ENCODE measurements at regions of chr4 and their contacts with region 1.

Region 1: GRCh38 chr4:145545538-145546174 is 64.0 kb downstream of the SMAD1 start:
- DNase-seq: no peak
- H3K4me3 ChIP-seq: peak overlapping the region in 1 of 4 donors; percentile 5
- H3K27ac ChIP-seq: peak overlapping the region; percentile 42 to 66 (median 50)
- H3K4me1 ChIP-seq: peaks cover 14 to 58% (median 30%) of the 10 kb centered on the region in 3 donors
- H3K27me3 ChIP-seq: no peaks in the 10 kb centered on the region
- CTCF ChIP-seq: no peak
- POLR2A ChIP-seq: no peak

Region 2: DNA sequence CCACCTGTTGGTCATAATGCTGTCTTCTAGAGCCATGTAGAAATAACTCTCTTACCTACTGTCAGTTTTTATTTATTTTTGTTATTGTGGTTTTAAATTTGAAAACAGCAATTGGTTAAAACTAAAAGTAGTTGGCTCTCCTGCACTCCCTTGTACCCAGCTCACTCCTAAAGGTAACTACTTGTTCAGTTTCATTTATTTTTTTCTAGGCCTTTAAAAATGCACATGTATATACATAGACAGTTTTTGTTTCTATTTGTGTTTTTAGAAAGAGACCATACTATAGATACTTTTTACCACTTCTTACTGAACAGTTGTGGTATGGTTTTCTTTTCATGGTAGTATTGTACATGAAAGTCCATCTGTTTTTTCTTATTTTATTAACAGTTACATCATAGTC is 47.2 kb before region 1 on chr4:
- intact Hi-C with region 1: loop called (anchors 10 kb)
- DNase-seq: no peak
- H3K4me3 ChIP-seq: no peak overlapping the region
- H3K27ac ChIP-seq: no peak overlapping the region
- H3K4me1 ChIP-seq: peaks cover 6 to 59% (median 9%) of the 10 kb centered on the region in 3 donors
- H3K27me3 ChIP-seq: no peaks in the 10 kb centered on the region
- CTCF ChIP-seq: no peak
- POLR2A ChIP-seq: no peak

Region 3: GRCh38 chr4:146165840-146166239 is 620.2 kb after region 1 on chr4:
- intact Hi-C with region 1: no loop called
- DNase-seq: no peak
- H3K4me3 ChIP-seq: no peak overlapping the region
- H3K27ac ChIP-seq: no peak overlapping the region
- H3K4me1 ChIP-seq: no peaks in the 10 kb centered on the region
- H3K27me3 ChIP-seq: no peaks in the 10 kb centered on the region
- CTCF ChIP-seq: no peak
- POLR2A ChIP-seq: no peak

Measured in esophagus squamous epithelium (tissue), 5 donors.